CD8-positive, alpha-beta memory T cell (primary cell): ENCODE measurements at regions of chr10 and their contacts with region 1.

Region 1: DNA sequence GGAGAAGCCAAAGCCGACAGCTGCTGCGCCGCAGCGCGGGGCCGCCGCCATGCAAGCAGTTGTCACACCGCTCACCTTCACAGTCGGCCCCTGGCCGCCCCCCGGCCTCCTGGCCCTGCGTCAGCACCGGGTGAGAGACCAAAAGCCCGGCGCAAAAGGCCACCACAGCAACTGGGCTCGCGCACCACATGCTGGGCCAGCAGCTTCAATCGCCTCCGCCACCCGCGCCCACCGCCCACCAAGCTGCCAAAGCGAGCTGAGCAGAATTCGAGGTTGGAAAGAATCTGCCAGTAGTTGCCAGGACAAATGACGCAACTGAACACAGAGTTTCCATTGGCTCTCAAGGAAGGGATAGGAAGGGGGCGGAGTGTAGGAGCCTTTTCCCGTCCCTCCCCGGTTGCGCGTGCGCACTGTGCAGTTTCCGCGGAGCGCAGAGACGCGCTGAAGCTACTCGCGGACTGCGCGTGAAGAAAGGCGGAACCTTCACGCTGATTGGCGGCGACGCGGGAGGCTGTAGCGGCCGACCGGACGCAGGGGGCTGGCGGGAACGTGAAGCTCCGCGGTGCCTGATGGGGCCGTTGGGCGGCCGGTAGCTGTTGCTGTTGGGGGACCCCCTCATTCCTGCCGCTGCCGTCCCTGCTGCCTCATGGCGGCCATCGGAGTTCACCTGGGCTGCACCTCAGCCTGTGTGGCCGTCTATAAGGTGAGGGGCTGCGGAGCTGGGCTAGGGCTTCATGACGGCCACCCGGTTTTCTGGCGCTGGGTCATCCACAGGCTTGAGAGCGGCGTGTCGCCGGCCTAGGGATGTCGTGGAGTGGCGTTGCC is at the starts of genes CDNF, HSPA14 and MSANTD7:
- DNase-seq: peak; percentile 99
- H3K4me3 ChIP-seq: peak within 1 kb of the TSS; percentile 93
- H3K4me3 Mint-ChIP-seq: peak within 1 kb of the TSS; percentile 93 to 99 (median 96)
- H3K27ac ChIP-seq: peak within 1 kb of the TSS; percentile 98
- H3K27ac Mint-ChIP-seq: peak within 1 kb of the TSS; percentile 86 to 99 (median 98)
- H3K4me1 ChIP-seq: peaks cover 22% of the 10 kb centered on the region
- H3K4me1 Mint-ChIP-seq: peaks cover 24 to 46% (median 43%) of the 10 kb centered on the region in 3 donors
- H3K27me3 ChIP-seq: no peaks in the 10 kb centered on the region
- H3K27me3 Mint-ChIP-seq: no peaks in the 10 kb centered on the region
- total RNA-seq, gene CDNF: 0.96 to 1.2 TPM
- total RNA-seq, gene HSPA14: 43.3 to 45.5 TPM
- total RNA-seq, gene MSANTD7: 28.5 to 30.4 TPM

Region 2: GRCh38 chr10:14536241-14537213 is 301.4 kb before region 1 on chr10:
- CTCF ChIA-PET with region 1: interaction called, 10 read pairs
- POLR2A ChIA-PET with region 1: interaction called, 4 read pairs
- DNase-seq: peak in 2 of 5 donors; percentile 28 to 59
- H3K4me3 ChIP-seq: no peak overlapping the region
- H3K4me3 Mint-ChIP-seq: no peak overlapping the region
- H3K27ac ChIP-seq: no peak overlapping the region
- H3K27ac Mint-ChIP-seq: peak overlapping the region in 7 of 8 donors; percentile 21 to 90 (median 76)
- H3K4me1 ChIP-seq: peaks cover 52% of the 10 kb centered on the region
- H3K4me1 Mint-ChIP-seq: peaks cover 76 to 97% (median 94%) of the 10 kb centered on the region in 3 donors
- H3K27me3 ChIP-seq: no peaks in the 10 kb centered on the region
- H3K27me3 Mint-ChIP-seq: no peaks in the 10 kb centered on the region

Region 3: DNA sequence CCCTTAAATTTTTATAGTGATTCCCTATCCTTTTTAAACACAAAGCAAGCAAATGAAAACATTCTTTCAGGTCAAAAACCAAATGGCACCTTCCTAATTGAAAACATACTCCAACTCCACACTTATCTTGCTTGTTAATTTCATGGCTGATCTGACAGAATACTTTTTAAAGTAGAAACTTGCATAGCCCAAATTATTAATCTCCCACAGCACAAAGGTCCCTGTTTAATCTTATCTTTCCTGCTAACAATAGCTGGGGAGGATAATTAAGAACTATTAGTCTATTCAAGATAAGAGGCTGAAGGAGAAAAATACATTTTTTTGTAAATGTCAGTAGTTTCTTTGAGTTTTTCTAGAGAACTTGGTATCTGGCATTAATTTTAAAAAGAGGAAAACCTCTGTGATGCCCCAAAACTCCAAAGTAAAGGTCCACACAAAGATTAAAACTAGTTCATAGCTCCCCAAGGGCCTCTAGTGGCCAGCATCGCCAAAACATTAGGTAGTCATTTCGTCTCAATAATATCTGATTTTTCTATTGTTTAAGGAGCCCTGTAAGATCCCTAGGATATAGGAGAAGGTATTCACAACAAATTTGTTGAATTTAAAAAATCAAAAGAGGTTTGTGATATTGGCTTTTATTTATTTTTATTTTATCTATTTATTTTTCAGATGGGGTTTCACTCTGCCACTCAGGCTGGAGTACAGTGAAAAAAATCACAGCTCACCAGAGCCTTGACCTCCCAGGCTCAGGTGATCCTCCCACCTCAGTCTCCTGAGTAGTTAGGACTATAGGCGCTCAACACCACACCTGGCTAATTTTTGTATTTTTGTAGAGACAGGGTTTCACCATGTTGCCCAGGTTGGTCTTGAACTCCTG is 14.9 kb before region 1 on chr10:
- CTCF ChIA-PET with region 1: interaction called, 10 read pairs
- POLR2A ChIA-PET with region 1: interaction called, 3 read pairs
- DNase-seq: peak in 4 of 5 donors; percentile 13 to 58 (median 24)
- H3K4me3 ChIP-seq: no peak overlapping the region
- H3K4me3 Mint-ChIP-seq: no peak overlapping the region
- H3K27ac ChIP-seq: no peak overlapping the region
- H3K27ac Mint-ChIP-seq: no peak overlapping the region
- H3K4me1 ChIP-seq: no peaks in the 10 kb centered on the region
- H3K4me1 Mint-ChIP-seq: peaks cover 0 to 6% (median 3%) of the 10 kb centered on the region in 3 donors
- H3K27me3 ChIP-seq: no peaks in the 10 kb centered on the region
- H3K27me3 Mint-ChIP-seq: no peaks in the 10 kb centered on the region

Region 4: GRCh38 chr10:14878266-14879054 is 40.5 kb after region 1 on chr10 and contains the start of gene SUV39H2:
- CTCF ChIA-PET with region 1: interaction called, 13 read pairs
- POLR2A ChIA-PET with region 1: interaction called, 35 read pairs
- DNase-seq: peak; percentile 87 to 94 (median 91)
- H3K4me3 ChIP-seq: peak within 1 kb of the TSS; percentile 92
- H3K4me3 Mint-ChIP-seq: peak within 1 kb of the TSS; percentile 91 to 96 (median 94)
- H3K27ac ChIP-seq: peak within 1 kb of the TSS; percentile 79
- H3K27ac Mint-ChIP-seq: peak within 1 kb of the TSS; percentile 81 to 98 (median 92)
- H3K4me1 ChIP-seq: peaks cover 21% of the 10 kb centered on the region
- H3K4me1 Mint-ChIP-seq: peaks cover 32 to 39% (median 33%) of the 10 kb centered on the region in 3 donors
- H3K27me3 ChIP-seq: no peaks in the 10 kb centered on the region
- H3K27me3 Mint-ChIP-seq: peaks cover 0 to 3% of the 10 kb centered on the region in 2 donors
- total RNA-seq, gene SUV39H2: 30.8 to 35.8 TPM

Region 5: GRCh38 chr10:14954001-14954770 is 116.2 kb after region 1 on chr10 and contains the start of gene DCLRE1C:
- CTCF ChIA-PET with region 1: interaction called, 7 read pairs
- POLR2A ChIA-PET with region 1: interaction called, 11 read pairs
- DNase-seq: peak; percentile 82 to 89 (median 87)
- H3K4me3 ChIP-seq: peak within 1 kb of the TSS; percentile 96
- H3K4me3 Mint-ChIP-seq: peak within 1 kb of the TSS; percentile 92 to 97 (median 93)
- H3K27ac ChIP-seq: peak within 1 kb of the TSS; percentile 78
- H3K27ac Mint-ChIP-seq: peak within 1 kb of the TSS; percentile 90 to 99 (median 96)
- H3K4me1 ChIP-seq: peaks cover 37% of the 10 kb centered on the region
- H3K4me1 Mint-ChIP-seq: peaks cover 51 to 67% (median 62%) of the 10 kb centered on the region in 3 donors
- H3K27me3 ChIP-seq: no peaks in the 10 kb centered on the region
- H3K27me3 Mint-ChIP-seq: peaks cover 0 to 2% of the 10 kb centered on the region in 2 donors
- total RNA-seq, gene DCLRE1C: 11.3 to 12.5 TPM

Region 6: GRCh38 chr10:16835228-16835627 is 1997.3 kb after region 1 on chr10:
- CTCF ChIA-PET with region 1: no interaction called
- POLR2A ChIA-PET with region 1: interaction called, 14 read pairs
- DNase-seq: peak in 3 of 5 donors; percentile 21 to 57 (median 43)
- H3K4me3 ChIP-seq: peak overlapping the region; percentile 39
- H3K4me3 Mint-ChIP-seq: peak overlapping the region; percentile 13 to 83 (median 72)
- H3K27ac ChIP-seq: no peak overlapping the region
- H3K27ac Mint-ChIP-seq: peak overlapping the region in 7 of 8 donors; percentile 1 to 86 (median 69)
- H3K4me1 ChIP-seq: peaks cover 8% of the 10 kb centered on the region
- H3K4me1 Mint-ChIP-seq: peaks cover 6 to 9% (median 7%) of the 10 kb centered on the region in 3 donors
- H3K27me3 ChIP-seq: no peaks in the 10 kb centered on the region
- H3K27me3 Mint-ChIP-seq: peaks cover 0 to 5% of the 10 kb centered on the region in 2 donors